Activated naive CD4-positive, alpha-beta T cell treated with anti-CD3 and anti-CD28 coated beads for 36 hours (primary cell): ENCODE measurements at regions of chr10 and their contacts with region 1.

Region 1: GRCh38 chr10:124614003-124614659 is 130.0 kb downstream of the FAM53B start:
- DNase-seq: peak; percentile 70
- H3K4me3 Mint-ChIP-seq: no peak overlapping the region
- H3K27ac Mint-ChIP-seq: no peak overlapping the region
- H3K4me1 Mint-ChIP-seq: peaks cover 40% of the 10 kb centered on the region
- H3K27me3 Mint-ChIP-seq: no peaks in the 10 kb centered on the region

Region 2: DNA sequence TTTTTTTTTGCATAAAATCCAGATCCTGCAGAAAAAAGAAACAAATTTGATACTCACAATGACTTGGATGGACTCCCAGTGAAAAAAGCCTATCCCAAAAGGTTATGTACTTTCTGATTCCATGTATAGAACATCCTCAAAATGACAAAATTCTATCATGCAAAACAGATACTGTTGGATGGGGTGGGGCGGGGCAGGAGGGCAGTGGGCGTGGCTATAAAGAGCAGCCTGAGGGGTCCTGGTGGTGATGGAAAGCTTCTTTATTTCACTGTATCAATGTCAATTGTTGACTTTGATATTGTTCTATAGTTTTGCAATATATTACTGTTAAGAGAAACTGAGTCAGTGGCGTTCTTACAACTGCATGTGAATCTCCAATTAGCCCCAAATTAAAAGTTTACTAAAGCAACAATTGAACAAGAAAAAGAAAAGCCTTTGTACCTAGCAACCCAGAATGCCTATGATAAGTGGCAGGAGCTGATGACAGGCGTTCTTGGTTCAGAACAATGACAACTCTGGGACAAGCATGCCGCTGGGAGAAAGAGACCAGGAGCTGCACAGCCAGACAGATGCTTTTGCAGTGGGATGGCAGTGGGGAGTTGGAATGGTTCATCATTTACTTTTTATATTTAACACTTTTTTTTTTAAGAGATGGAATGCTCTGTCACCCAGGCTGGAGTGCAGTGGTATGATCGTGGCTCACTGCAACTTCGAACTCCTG is 50.7 kb before region 1 on chr10:
- CTCF ChIA-PET with region 1: interaction called, 12 read pairs
- intact Hi-C with region 1: no loop called
- DNase-seq: no peak
- H3K4me3 Mint-ChIP-seq: no peak overlapping the region
- H3K27ac Mint-ChIP-seq: no peak overlapping the region
- H3K4me1 Mint-ChIP-seq: no peaks in the 10 kb centered on the region
- H3K27me3 Mint-ChIP-seq: no peaks in the 10 kb centered on the region

Region 3: DNA sequence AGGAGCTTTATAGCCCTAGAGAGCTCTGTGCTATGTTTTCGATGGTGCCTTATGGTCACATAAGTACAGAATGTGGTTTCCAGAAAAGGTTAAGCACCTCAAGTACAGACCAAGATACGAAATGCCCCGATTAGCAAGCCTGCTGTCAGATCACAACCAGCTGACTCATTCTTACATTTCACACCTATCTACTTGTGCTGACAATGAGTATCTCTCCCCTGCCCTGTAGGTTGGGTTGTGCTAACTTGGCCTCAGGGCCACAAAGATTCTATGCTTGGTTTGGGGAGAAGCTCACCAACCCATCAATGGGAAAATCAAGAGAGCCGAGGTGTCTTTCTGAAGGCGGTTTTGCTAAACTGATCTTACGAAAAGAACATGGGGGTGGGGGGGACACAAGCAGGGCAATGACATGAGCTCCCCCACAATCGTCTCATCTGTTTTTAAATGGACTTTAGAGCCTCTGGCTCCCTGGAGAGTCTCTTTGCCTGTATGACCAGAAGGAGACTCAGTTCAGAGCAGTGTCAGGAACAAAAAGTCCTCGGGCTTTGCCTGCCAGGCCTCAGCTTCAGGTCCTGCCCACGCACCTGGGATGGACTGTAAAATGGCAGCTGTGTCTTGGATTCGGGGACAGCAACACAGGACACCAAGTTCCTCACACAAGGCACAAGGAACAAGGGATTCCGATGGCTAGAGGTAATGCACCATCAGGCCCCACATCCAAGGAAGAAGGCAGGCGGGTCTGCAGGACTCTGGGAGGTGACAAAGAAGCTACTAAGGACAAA is 74.9 kb after region 1 on chr10:
- CTCF ChIA-PET with region 1: interaction called, 3 read pairs
- intact Hi-C with region 1: loop called (anchors 2 kb)
- DNase-seq: peak; percentile 83
- H3K4me3 Mint-ChIP-seq: no peak overlapping the region
- H3K27ac Mint-ChIP-seq: peak overlapping the region; percentile 46
- H3K4me1 Mint-ChIP-seq: peaks cover 74% of the 10 kb centered on the region
- H3K27me3 Mint-ChIP-seq: no peaks in the 10 kb centered on the region